Activated CD8-positive, alpha-beta T cell treated with anti-CD3 and anti-CD28 coated beads, Interleukin-2, amount 10 ng/mL, durations not matched to agents 7 days and 5 days (primary cell): ENCODE measurements at regions of chr9 and their contacts with region 1.

Region 1: GRCh38 chr9:107340920-107341632 is 58.0 kb downstream of the RAD23B start:
- DNase-seq: peak; percentile 84
- ATAC-seq: peak; percentile 87
- H3K4me3 Mint-ChIP-seq: no peak overlapping the region
- H3K27ac Mint-ChIP-seq: no peak overlapping the region
- H3K4me1 Mint-ChIP-seq: peaks cover 12% of the 10 kb centered on the region
- H3K27me3 Mint-ChIP-seq: no peaks in the 10 kb centered on the region

Region 2: DNA sequence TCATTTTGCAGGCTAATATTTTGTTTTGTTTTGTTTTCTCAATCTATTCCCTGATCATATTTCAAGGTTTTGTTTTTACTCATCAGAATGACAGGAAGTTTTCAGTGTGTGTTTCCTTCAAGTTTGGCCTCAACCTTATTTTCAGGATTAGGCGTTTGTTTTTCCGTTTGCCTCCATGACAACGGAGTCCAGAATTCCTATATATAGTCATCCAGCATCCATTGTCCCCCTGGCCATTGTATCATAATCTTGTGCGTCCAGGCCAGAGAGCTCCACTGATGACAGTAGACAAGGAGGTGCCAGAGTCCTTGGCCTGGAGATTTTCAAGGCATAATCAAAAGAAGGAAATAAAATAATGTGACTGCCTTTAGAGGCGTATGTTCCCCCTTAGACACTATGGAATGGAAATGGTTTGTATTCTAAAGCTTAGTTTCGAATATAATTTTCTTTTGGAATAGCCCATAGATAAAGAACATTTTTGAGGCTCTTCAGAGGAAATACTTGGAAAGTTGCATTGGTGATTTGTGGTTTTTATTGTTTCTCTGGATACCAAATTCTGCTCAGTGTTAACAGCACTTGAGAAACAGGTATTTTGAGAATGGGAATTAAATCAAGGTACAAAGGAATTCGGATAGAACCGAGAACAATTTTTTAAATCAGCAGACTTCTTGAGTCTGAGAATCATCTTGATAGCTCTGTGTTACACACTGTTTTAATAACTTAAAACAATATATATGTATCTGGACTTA is 378.3 kb before region 1 on chr9:
- CTCF ChIA-PET with region 1: no interaction called
- POLR2A ChIA-PET with region 1: no interaction called
- DNase-seq: no peak
- ATAC-seq: no peak
- H3K4me3 Mint-ChIP-seq: no peak overlapping the region
- H3K27ac Mint-ChIP-seq: no peak overlapping the region
- H3K4me1 Mint-ChIP-seq: peaks cover 19% of the 10 kb centered on the region
- H3K27me3 Mint-ChIP-seq: peaks cover under 1% of the 10 kb centered on the region

Region 3: DNA sequence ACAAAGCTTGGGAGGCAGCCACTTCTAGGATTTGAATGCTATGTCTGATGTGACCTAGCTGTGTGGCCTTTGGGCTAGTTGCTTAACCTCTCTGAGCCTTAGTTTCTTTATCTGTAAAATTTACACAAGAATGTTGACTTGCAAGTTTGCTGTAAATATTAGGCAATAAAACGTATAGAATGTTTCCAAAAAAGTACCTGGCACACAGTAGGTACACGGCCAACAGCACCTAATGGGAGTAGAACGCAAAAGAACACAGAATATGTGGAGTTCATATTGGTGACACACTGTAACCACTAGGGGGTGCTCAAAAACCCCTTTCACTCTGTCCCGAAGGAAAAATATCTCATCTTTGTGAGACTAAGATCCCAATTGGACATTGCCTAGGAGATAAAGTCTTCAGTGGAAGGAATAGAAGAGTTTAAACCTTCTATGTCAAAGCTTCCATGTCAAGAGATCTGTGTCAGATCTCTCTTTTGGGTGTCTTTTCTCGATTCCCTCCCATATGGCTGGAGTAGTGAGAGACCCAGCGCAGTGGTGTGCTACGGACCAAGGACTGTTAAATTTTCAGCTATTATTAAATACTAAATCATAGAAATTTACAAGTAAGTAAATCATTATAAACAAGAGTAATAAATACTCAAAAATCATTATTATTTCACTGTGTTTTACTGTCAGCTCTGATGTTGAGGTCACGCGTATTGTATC is 203.4 kb before region 1 on chr9:
- CTCF ChIA-PET with region 1: interaction called, 23 read pairs
- POLR2A ChIA-PET with region 1: no interaction called
- DNase-seq: peak; percentile 23
- ATAC-seq: no peak
- H3K4me3 Mint-ChIP-seq: no peak overlapping the region
- H3K27ac Mint-ChIP-seq: no peak overlapping the region
- H3K4me1 Mint-ChIP-seq: no peaks in the 10 kb centered on the region
- H3K27me3 Mint-ChIP-seq: no peaks in the 10 kb centered on the region

Region 4: GRCh38 chr9:107239474-107239873 is 101.6 kb before region 1 on chr9:
- CTCF ChIA-PET with region 1: interaction called, 15 read pairs
- POLR2A ChIA-PET with region 1: no interaction called
- DNase-seq: no peak
- ATAC-seq: no peak
- H3K4me3 Mint-ChIP-seq: no peak overlapping the region
- H3K27ac Mint-ChIP-seq: no peak overlapping the region
- H3K4me1 Mint-ChIP-seq: peaks cover 11% of the 10 kb centered on the region
- H3K27me3 Mint-ChIP-seq: peaks cover 7% of the 10 kb centered on the region

Region 5: GRCh38 chr9:107260437-107261086 is 80.5 kb before region 1 on chr9:
- CTCF ChIA-PET with region 1: interaction called, 12 read pairs
- POLR2A ChIA-PET with region 1: no interaction called
- DNase-seq: no peak
- ATAC-seq: peak; percentile 19
- H3K4me3 Mint-ChIP-seq: no peak overlapping the region
- H3K27ac Mint-ChIP-seq: no peak overlapping the region
- H3K4me1 Mint-ChIP-seq: peaks cover 5% of the 10 kb centered on the region
- H3K27me3 Mint-ChIP-seq: peaks cover 4% of the 10 kb centered on the region

Region 6: GRCh38 chr9:107269681-107270080 is 71.4 kb before region 1 on chr9:
- CTCF ChIA-PET with region 1: interaction called, 11 read pairs
- POLR2A ChIA-PET with region 1: no interaction called
- DNase-seq: no peak
- ATAC-seq: no peak
- H3K4me3 Mint-ChIP-seq: no peak overlapping the region
- H3K27ac Mint-ChIP-seq: no peak overlapping the region
- H3K4me1 Mint-ChIP-seq: peaks cover 2% of the 10 kb centered on the region
- H3K27me3 Mint-ChIP-seq: peaks cover 19% of the 10 kb centered on the region

Region 7: DNA sequence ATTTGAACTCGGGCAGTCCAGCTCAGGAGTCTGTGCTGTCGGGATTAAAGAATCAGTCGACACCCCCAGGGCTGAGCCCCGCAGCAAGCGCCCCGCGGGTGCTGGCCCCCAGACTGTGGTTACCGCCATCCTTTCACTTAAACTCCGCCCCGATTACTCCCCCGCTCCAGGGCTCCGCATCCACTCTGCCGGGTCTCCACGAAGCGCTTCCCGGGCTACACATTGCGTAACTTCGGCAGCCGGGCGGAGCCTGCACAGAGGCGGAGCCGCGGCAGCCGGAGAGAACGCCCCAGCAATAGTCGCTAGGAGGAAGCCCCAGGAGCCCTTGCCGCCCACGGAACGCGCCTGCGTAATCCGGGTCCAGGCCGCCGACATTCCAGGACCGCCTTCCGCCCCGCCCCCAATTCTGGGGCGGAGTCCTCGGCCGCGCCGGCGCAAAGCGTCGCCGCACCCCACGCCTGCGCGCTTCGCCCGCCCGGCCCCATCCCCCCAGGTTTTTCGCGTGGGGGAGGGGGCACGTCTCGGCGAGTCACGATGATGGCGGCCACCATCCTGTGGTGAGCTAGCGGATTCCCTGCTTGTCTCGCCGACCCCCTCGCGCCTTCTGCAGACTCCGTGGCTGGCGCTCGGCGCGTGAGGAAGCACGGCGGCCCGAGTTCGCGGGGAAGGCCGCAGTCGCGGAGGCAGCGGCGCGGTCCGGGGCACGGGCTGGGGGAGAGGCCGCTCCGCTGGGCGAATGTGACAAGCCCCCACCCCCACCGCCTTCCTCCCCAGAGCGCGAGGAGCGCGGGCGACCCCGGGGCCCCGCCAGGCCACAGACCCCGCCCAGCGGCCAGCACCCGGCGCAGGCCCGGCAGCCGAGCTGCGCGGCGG is 58.1 kb before region 1 on chr9 and contains the start of gene RAD23B:
- CTCF ChIA-PET with region 1: interaction called, 26 read pairs
- POLR2A ChIA-PET with region 1: interaction called, 10 read pairs
- DNase-seq: peak; percentile 97
- ATAC-seq: peak; percentile 92
- H3K4me3 Mint-ChIP-seq: peak within 1 kb of the TSS; percentile 92
- H3K27ac Mint-ChIP-seq: peak within 1 kb of the TSS; percentile 92
- H3K4me1 Mint-ChIP-seq: peaks cover 43% of the 10 kb centered on the region
- H3K27me3 Mint-ChIP-seq: no peaks in the 10 kb centered on the region
- total RNA-seq, gene RAD23B: 104 to 106 TPM

Region 8: DNA sequence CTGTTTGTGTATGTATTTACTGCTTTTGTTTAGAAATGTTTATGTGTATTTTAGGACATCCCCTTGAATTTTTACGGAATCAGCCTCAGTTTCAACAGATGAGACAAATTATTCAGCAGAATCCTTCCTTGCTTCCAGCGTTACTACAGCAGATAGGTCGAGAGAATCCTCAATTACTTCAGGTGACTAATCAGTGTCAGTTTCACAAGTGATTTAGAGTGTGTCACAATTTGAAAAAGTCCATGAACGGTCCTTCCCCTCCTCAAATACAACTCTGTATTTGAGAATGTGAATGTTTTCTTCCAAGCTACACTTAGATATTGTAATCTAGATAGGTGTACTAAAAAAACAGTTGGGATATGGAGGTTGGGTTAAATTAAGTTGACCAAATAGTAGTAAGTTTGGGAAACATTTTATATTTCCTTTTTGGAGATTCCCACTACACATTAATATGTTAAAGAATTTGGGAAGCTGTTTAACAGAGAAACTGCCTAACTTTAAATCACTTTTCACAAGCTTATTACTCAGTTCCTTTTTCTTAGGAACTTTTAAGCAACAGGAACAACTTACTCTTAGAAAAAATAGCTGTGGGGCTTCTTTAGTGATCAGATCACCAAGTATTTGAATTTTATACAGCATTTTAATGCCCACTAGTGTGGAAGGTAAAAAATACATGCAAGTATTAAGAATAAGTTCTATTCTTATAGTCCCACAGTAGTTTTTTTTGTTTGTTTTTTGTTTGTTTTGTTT is 17.1 kb before region 1 on chr9:
- CTCF ChIA-PET with region 1: interaction called, 19 read pairs
- POLR2A ChIA-PET with region 1: no interaction called
- DNase-seq: no peak
- ATAC-seq: no peak
- H3K4me3 Mint-ChIP-seq: no peak overlapping the region
- H3K27ac Mint-ChIP-seq: no peak overlapping the region
- H3K4me1 Mint-ChIP-seq: peaks cover 4% of the 10 kb centered on the region
- H3K27me3 Mint-ChIP-seq: no peaks in the 10 kb centered on the region